ENCODE measurements at regions of chr1 and their contacts with region 1.

Region 1: GRCh38 chr1:202235856-202236837 is 42.5 kb downstream of the LGR6 start:
- DNase-seq: peak; percentile 97
- H3K4me3 Mint-ChIP-seq: peak overlapping the region; percentile 61
- H3K27ac Mint-ChIP-seq: peak overlapping the region; percentile 49
- H3K4me1 Mint-ChIP-seq: peaks cover 35% of the 10 kb centered on the region
- H3K27me3 Mint-ChIP-seq: no peaks in the 10 kb centered on the region
- CTCF ChIP-seq: peak; percentile 100

Region 2: GRCh38 chr1:201999625-202000238 is 236.4 kb before region 1 on chr1:
- CTCF ChIA-PET with region 1: no interaction called
- POLR2A ChIA-PET with region 1: no interaction called
- intact Hi-C with region 1: no loop called
- DNase-seq: peak; percentile 81
- H3K4me3 Mint-ChIP-seq: no peak overlapping the region
- H3K27ac Mint-ChIP-seq: no peak overlapping the region
- H3K4me1 Mint-ChIP-seq: no peaks in the 10 kb centered on the region
- H3K27me3 Mint-ChIP-seq: no peaks in the 10 kb centered on the region
- CTCF ChIP-seq: peak; percentile 78

Region 3: GRCh38 chr1:202184750-202185460 is 51.2 kb before region 1 on chr1:
- CTCF ChIA-PET with region 1: interaction called, 11 read pairs
- POLR2A ChIA-PET with region 1: interaction called, 3 read pairs
- intact Hi-C with region 1: loop called (anchors 2 kb)
- DNase-seq: peak; percentile 96
- H3K4me3 Mint-ChIP-seq: no peak overlapping the region
- H3K27ac Mint-ChIP-seq: no peak overlapping the region
- H3K4me1 Mint-ChIP-seq: peaks cover 13% of the 10 kb centered on the region
- H3K27me3 Mint-ChIP-seq: peaks cover 50% of the 10 kb centered on the region
- CTCF ChIP-seq: peak; percentile 100

Region 4: DNA sequence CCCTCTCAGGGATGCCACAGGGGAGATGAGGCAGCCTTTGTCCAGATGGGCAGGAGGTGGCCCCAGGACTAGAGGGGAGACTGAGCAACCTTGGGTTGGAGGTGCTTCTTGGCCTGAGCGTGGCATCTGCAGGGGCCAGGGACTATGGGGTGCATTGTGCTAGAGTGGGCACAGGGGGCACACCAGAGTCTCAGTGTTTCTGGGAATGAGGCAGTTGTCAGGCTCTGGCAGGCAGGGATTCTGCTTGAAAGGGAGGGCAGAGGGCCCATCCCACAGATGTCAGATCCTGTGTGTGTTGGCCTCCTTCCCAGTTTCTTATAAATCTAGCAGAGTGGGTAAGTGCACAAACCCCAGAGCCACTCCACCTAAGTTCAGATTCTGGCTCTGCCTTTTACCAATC is 28.9 kb before region 1 on chr1:
- CTCF ChIA-PET with region 1: interaction called, 15 read pairs
- POLR2A ChIA-PET with region 1: no interaction called
- intact Hi-C with region 1: no loop called
- DNase-seq: peak; percentile 69
- H3K4me3 Mint-ChIP-seq: no peak overlapping the region
- H3K27ac Mint-ChIP-seq: no peak overlapping the region
- H3K4me1 Mint-ChIP-seq: peaks cover 5% of the 10 kb centered on the region
- H3K27me3 Mint-ChIP-seq: peaks cover 8% of the 10 kb centered on the region
- CTCF ChIP-seq: peak; percentile 13

Region 5: GRCh38 chr1:202247894-202248681 is 11.9 kb after region 1 on chr1:
- CTCF ChIA-PET with region 1: interaction called, 21 read pairs
- POLR2A ChIA-PET with region 1: interaction called, 12 read pairs
- intact Hi-C with region 1: no loop called
- DNase-seq: no peak
- H3K4me3 Mint-ChIP-seq: no peak overlapping the region
- H3K27ac Mint-ChIP-seq: no peak overlapping the region
- H3K4me1 Mint-ChIP-seq: peaks cover 12% of the 10 kb centered on the region
- H3K27me3 Mint-ChIP-seq: peaks cover 27% of the 10 kb centered on the region
- CTCF ChIP-seq: no peak

Region 6: DNA sequence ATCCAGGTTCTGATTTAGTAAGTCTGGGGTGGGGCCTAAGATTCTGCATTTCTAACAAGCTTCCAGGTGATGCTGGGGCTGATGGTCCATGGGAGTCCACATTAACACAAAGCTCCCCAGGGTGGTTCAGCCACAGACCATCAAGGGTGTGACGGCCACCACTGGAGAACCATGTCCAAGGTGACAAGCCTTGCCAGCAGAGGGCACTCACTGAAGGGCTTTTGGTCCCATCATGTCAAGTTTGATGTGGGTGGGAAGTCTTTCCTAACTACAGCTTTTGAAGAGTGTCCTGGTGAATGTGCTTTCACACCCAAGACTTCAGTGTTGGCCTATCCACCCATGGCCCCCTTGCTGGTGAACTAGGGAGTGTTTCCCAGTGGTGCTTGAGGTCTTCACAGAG is 38.5 kb after region 1 on chr1:
- CTCF ChIA-PET with region 1: interaction called, 11 read pairs
- POLR2A ChIA-PET with region 1: no interaction called
- intact Hi-C with region 1: no loop called
- DNase-seq: peak; percentile 92
- H3K4me3 Mint-ChIP-seq: no peak overlapping the region
- H3K27ac Mint-ChIP-seq: no peak overlapping the region
- H3K4me1 Mint-ChIP-seq: peaks cover 3% of the 10 kb centered on the region
- H3K27me3 Mint-ChIP-seq: no peaks in the 10 kb centered on the region
- CTCF ChIP-seq: peak; percentile 88